ENCODE measurements at regions of chr15 and their contacts with region 1.

Region 1: GRCh38 chr15:99409097-99409473 is 156.7 kb upstream of the MEF2A start:
- DNase-seq: peak; percentile 82
- H3K27ac ChIP-seq: peak overlapping the region; percentile 83
- CTCF ChIP-seq: peak; percentile 79

Region 2: DNA sequence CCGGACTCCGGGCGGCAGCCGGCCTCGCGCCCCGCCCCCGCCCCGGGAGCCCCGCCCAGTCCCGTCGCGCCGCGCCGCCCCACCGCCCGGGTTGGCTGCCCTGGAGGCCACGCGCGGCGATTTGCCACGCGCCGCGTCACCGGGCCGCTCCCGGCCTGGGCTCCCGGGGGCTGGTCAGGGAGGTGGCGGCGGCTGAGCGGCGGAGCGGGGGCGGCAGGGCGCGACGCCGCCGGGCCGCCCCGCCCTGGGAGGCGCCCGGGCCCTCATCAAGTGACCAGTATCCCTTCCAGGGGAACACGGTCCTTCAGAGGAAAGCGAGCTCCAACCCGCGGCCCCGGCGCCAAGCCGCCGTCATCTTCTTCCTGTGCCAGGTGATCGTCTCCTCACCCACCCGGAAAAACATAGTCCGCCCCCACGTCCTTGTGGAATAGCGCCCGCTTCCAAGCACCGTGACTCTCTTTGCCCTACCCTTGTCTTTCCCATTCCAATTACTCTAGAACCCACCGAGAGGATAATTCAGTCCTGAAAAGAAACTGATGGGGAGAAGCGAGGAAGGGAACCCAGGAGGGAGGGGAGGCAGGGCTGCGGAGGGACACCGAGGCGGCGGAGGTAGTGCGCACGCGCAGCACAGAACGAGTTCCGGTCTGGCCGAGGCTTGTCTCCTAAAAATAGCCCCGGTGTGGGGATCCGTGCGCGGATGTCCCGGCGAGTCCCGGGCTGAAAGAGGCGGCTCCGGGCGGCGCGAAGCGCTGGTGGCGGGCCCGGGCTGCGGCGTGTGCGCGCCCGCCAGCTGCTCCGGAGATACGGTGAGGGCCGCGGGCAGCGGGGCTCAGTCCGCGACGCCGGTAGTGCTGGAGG is 156.4 kb after region 1 on chr15 and contains the start of gene MEF2A:
- CTCF ChIA-PET with region 1: interaction called, 10 read pairs
- POLR2A ChIA-PET with region 1: interaction called, 3 read pairs
- DNase-seq: peak; percentile 97
- H3K27ac ChIP-seq: peak within 1 kb of the TSS; percentile 96
- CTCF ChIP-seq: no peak

Measured in RWPE1 (cell line).